CD4-positive, alpha-beta memory T cell (primary cell): ENCODE measurements at regions of chr5 and their contacts with region 1.

Region 1: GRCh38 chr5:180328296-180329137 is 24.6 kb downstream of the GFPT2 start:
- DNase-seq: peak; percentile 73 to 83 (median 77)
- H3K4me3 ChIP-seq: no peak overlapping the region
- H3K4me3 Mint-ChIP-seq: no peak overlapping the region
- H3K27ac ChIP-seq: no peak overlapping the region
- H3K27ac Mint-ChIP-seq: no peak overlapping the region
- H3K4me1 ChIP-seq: no peaks in the 10 kb centered on the region
- H3K4me1 Mint-ChIP-seq: peaks cover 0 to 5% (median 0%) of the 10 kb centered on the region in 4 donors
- H3K27me3 ChIP-seq: no peaks in the 10 kb centered on the region
- H3K27me3 Mint-ChIP-seq: peaks cover 4 to 8% of the 10 kb centered on the region in 2 donors

Region 2: GRCh38 chr5:180126726-180127681 is 201.5 kb before region 1 on chr5:
- CTCF ChIA-PET with region 1: interaction called, 3 read pairs
- POLR2A ChIA-PET with region 1: no interaction called
- intact Hi-C with region 1: loop called (anchors 5 kb)
- DNase-seq: peak in 1 of 5 donors; percentile 19
- H3K4me3 ChIP-seq: no peak overlapping the region
- H3K4me3 Mint-ChIP-seq: no peak overlapping the region
- H3K27ac ChIP-seq: no peak overlapping the region
- H3K27ac Mint-ChIP-seq: no peak overlapping the region
- H3K4me1 ChIP-seq: no peaks in the 10 kb centered on the region
- H3K4me1 Mint-ChIP-seq: no peaks in the 10 kb centered on the region
- H3K27me3 ChIP-seq: no peaks in the 10 kb centered on the region
- H3K27me3 Mint-ChIP-seq: peaks cover 5 to 8% of the 10 kb centered on the region in 2 donors

Region 3: DNA sequence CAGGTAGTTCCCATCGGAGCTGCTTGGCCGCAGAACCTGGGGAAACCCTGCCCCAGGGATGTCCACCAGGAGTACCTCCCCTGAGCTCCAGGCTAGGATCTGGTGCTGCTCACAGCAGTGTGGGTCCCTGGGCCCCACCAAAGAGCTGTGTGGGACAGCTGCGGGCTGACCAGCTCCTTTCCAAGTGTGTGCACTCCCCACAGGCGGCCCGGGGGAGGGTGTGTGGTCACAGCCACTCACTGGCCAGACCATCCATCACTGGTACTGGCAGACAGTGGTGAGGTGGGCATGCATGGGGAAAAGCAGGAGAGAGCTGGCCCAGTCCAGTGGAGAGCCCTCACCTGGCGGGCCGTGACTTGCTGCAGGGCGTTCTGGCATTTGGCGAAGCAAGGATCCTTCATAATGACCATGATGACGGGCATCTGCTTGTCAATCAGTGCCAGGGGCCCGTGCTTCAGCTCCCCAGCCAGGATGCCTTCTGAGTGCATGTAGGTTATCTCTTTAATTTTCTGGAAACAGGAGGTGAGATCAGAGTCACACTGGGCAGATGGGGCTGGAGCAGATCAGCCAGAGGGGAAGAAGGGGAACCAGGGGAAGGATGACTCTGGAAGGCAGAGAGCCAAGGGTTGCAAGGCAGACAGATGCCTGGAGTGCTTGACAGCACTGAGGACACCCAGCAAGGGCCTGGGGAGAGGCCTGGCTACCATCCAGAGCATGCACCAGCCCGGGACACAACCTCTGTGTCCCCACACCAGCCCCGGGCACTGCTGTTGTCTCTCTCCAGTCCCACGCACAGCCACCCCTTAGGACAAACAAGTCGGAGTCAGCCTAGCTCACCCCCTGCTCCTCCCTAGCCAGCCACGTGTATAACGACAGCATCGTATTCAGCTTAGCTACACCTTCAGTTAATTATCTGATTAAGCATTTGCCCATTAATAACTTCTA is 23.8 kb before region 1 on chr5:
- CTCF ChIA-PET with region 1: interaction called, 16 read pairs
- POLR2A ChIA-PET with region 1: no interaction called
- intact Hi-C with region 1: no loop called
- DNase-seq: no peak
- H3K4me3 ChIP-seq: no peak overlapping the region
- H3K4me3 Mint-ChIP-seq: no peak overlapping the region
- H3K27ac ChIP-seq: no peak overlapping the region
- H3K27ac Mint-ChIP-seq: peak overlapping the region in 1 of 7 donors; percentile 60
- H3K4me1 ChIP-seq: no peaks in the 10 kb centered on the region
- H3K4me1 Mint-ChIP-seq: no peaks in the 10 kb centered on the region
- H3K27me3 ChIP-seq: no peaks in the 10 kb centered on the region
- H3K27me3 Mint-ChIP-seq: peaks cover 0 to 6% of the 10 kb centered on the region in 2 donors

Region 4: GRCh38 chr5:180315762-180316212 is 12.7 kb before region 1 on chr5:
- CTCF ChIA-PET with region 1: interaction called, 56 read pairs
- POLR2A ChIA-PET with region 1: no interaction called
- intact Hi-C with region 1: no loop called
- DNase-seq: peak; percentile 55 to 73 (median 61)
- H3K4me3 ChIP-seq: no peak overlapping the region
- H3K4me3 Mint-ChIP-seq: peak overlapping the region in 1 of 8 donors; percentile 14
- H3K27ac ChIP-seq: no peak overlapping the region
- H3K27ac Mint-ChIP-seq: peak overlapping the region in 1 of 7 donors; percentile 2
- H3K4me1 ChIP-seq: no peaks in the 10 kb centered on the region
- H3K4me1 Mint-ChIP-seq: peaks cover 0 to 15% (median 4%) of the 10 kb centered on the region in 4 donors
- H3K27me3 ChIP-seq: no peaks in the 10 kb centered on the region
- H3K27me3 Mint-ChIP-seq: peaks cover 3 to 6% of the 10 kb centered on the region in 2 donors

Region 5: DNA sequence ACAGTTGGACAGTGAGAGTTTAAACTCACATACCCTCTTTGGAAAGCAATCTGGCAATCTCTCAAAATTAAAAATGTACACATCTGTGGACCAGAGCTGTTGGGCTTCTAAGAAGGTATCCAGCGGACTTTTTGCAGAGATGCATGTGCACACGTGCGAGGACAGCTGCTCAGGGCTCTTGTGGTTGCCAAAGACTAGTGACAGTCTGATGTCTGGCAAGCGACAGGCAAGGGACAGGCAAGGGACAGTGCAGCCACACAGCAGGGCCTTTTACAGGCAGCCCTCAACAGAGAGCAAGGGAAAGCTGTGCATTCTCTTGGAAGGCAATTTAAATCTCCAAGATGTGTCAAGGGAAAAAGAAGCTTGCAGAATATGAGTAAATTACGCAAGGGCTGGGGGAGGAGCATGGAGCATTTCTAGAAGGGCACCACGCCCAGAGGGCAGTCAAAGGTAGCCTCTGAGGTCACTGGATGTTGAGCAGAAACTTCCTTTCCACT is 15.4 kb after region 1 on chr5:
- CTCF ChIA-PET with region 1: interaction called, 29 read pairs
- POLR2A ChIA-PET with region 1: no interaction called
- intact Hi-C with region 1: no loop called
- DNase-seq: no peak
- H3K4me3 ChIP-seq: no peak overlapping the region
- H3K4me3 Mint-ChIP-seq: no peak overlapping the region
- H3K27ac ChIP-seq: no peak overlapping the region
- H3K27ac Mint-ChIP-seq: no peak overlapping the region
- H3K4me1 ChIP-seq: no peaks in the 10 kb centered on the region
- H3K4me1 Mint-ChIP-seq: no peaks in the 10 kb centered on the region
- H3K27me3 ChIP-seq: no peaks in the 10 kb centered on the region
- H3K27me3 Mint-ChIP-seq: peaks cover 4 to 19% of the 10 kb centered on the region in 2 donors